ENCODE measurements at regions of chr11 and their contacts with region 1.

Region 1: GRCh38 chr11:2975594-2975993 is 16.5 kb downstream of the NAP1L4 start:
- DNase-seq: peak; percentile 14
- H3K4me3 Mint-ChIP-seq: no peak overlapping the region
- H3K27ac Mint-ChIP-seq: no peak overlapping the region
- H3K4me1 Mint-ChIP-seq: peaks cover 29% of the 10 kb centered on the region
- H3K27me3 Mint-ChIP-seq: no peaks in the 10 kb centered on the region

Region 2: GRCh38 chr11:3021125-3021524 is 45.5 kb after region 1 on chr11:
- intact Hi-C with region 1: loop called (anchors 1 kb)
- DNase-seq: no peak
- H3K4me3 Mint-ChIP-seq: no peak overlapping the region
- H3K27ac Mint-ChIP-seq: no peak overlapping the region
- H3K4me1 Mint-ChIP-seq: peaks cover 27% of the 10 kb centered on the region
- H3K27me3 Mint-ChIP-seq: no peaks in the 10 kb centered on the region